Pancreas (tissue), 10 donors: ENCODE measurements at regions of chr20 and their contacts with region 1.

Region 1: DNA sequence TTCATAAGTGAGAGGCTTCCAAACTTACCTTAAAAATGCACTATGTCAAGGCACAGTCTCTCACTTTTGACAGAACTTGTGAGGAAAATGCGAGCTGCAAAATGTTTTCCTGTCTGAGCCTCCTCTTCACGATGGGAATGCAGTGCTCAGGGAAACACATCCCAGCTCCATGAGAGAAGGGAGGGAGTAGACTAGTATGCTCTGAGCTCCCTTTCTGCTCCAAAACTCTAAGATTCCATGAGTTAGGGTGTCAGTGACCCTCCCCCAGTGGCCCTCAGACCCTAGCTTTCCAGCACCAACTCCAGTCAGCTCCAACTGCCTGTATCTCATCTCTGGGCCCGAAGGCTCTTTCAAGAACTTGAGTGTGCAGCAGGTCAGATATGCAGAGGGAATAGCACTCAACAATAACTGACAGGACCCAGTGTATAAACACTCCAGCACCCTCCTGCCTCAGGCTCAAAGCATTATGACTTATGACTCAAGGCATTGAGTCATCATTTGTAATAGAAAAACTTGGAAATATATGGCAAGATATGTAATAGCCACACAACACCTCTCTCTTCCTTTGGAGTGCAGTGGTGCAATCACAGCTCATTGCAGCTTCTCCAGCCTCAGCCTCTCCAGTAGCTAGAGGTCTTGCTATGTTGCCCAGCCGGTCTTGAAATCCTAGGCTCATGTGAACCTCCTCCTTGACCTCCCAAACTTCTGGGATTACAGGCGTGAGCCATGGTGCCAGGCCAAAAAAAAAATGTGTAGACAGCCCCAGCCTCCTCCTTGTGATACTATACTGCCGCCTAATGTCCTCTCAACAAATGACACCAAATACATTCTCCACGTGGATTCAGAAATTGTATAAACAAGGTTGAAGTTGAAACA is 16.7 kb upstream of the ENTPD6 start:
- DNase-seq: peak in 2 of 6 donors; percentile 28 to 57
- ATAC-seq: peak; percentile 73 to 91 (median 86)
- H3K4me3 ChIP-seq: no peak overlapping the region
- H3K27ac ChIP-seq: peak overlapping the region; percentile 14 to 64 (median 40)
- H3K4me1 ChIP-seq: peaks cover 7 to 17% (median 10%) of the 10 kb centered on the region in 3 donors
- H3K27me3 ChIP-seq: no peaks in the 10 kb centered on the region
- CTCF ChIP-seq: peak; percentile 25 to 67 (median 56)

Region 2: GRCh38 chr20:24992487-24993205 is 186.2 kb before region 1 on chr20 and contains the start of gene APMAP:
- intact Hi-C with region 1: loop called in 1 of 3 experiments (anchors 10 kb)
- DNase-seq: peak; percentile 93 to 97 (median 96)
- ATAC-seq: peak; percentile 94 to 97 (median 96)
- H3K4me3 ChIP-seq: peak within 1 kb of the TSS; percentile 48 to 90 (median 68)
- H3K27ac ChIP-seq: peak within 1 kb of the TSS; percentile 84 to 96 (median 90)
- H3K4me1 ChIP-seq: peaks cover 5 to 32% (median 8%) of the 10 kb centered on the region in 3 donors
- H3K27me3 ChIP-seq: no peaks in the 10 kb centered on the region
- CTCF ChIP-seq: no peak
- total RNA-seq, gene APMAP: 20.8 to 39.2 (median 28.4) TPM

Region 3: DNA sequence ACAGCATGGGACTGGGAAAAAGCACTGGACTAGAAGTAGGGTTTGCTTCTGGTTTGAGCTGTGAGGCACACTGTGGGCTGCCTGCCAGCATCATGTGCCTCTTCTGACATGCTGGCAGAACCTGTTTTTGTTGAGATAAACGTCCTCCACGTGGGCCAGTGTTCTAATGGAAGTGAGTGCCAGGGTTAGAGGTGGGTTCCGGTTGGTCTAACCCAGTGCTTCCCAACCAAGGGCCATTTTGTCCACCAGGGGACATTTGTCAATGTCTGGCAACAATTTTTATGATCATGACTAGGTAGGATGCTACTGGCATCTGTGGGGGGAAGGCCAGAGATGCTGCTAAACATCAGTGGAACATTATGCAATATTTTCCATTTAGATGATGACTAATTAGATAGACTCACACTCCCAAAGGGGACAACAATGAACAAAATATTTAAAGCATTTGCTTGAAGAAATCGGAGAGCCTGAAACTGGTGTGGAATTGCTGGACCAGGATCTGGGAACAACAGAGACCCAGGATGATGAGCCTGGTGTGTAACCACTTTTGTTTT is 178.5 kb before region 1 on chr20:
- intact Hi-C with region 1: loop called in 2 of 3 experiments (anchors 10 kb)
- DNase-seq: peak; percentile 86 to 96 (median 92)
- ATAC-seq: peak; percentile 90 to 93 (median 92)
- H3K4me3 ChIP-seq: no peak overlapping the region
- H3K27ac ChIP-seq: peak overlapping the region; percentile 43 to 78 (median 66)
- H3K4me1 ChIP-seq: peaks cover 15 to 19% (median 16%) of the 10 kb centered on the region in 3 donors
- H3K27me3 ChIP-seq: no peaks in the 10 kb centered on the region
- CTCF ChIP-seq: no peak

Region 4: GRCh38 chr20:25065625-25066338 is 113.0 kb before region 1 on chr20:
- intact Hi-C with region 1: loop called in 1 of 3 experiments (anchors 5 kb)
- DNase-seq: peak in 2 of 6 donors; percentile 47 to 70
- ATAC-seq: peak; percentile 74 to 88 (median 82)
- H3K4me3 ChIP-seq: no peak overlapping the region
- H3K27ac ChIP-seq: no peak overlapping the region
- H3K4me1 ChIP-seq: peaks cover 9 to 24% (median 14%) of the 10 kb centered on the region in 3 donors
- H3K27me3 ChIP-seq: no peaks in the 10 kb centered on the region
- CTCF ChIP-seq: peak; percentile 35 to 58 (median 58)

Region 5: GRCh38 chr20:25081065-25081729 is 97.6 kb before region 1 on chr20:
- intact Hi-C with region 1: loop called in 1 of 3 experiments (anchors 10 kb)
- DNase-seq: peak in 1 of 6 donors; percentile 45
- ATAC-seq: peak; percentile 37 to 66 (median 48)
- H3K4me3 ChIP-seq: peak overlapping the region in 1 of 4 donors; percentile 24
- H3K27ac ChIP-seq: no peak overlapping the region
- H3K4me1 ChIP-seq: peaks cover 9 to 23% (median 11%) of the 10 kb centered on the region in 3 donors
- H3K27me3 ChIP-seq: peaks cover 0 to 34% (median 9%) of the 10 kb centered on the region in 4 donors
- CTCF ChIP-seq: no peak